ENCODE measurements at regions of chr2 and their contacts with region 1.

Region 1: GRCh38 chr2:190267302-190267701 is 52.3 kb downstream of the HIBCH start:
- DNase-seq: peak; percentile 31
- H3K4me3 ChIP-seq: no peak overlapping the region
- H3K27me3 ChIP-seq: no peaks in the 10 kb centered on the region
- CTCF ChIP-seq: no peak

Region 2: DNA sequence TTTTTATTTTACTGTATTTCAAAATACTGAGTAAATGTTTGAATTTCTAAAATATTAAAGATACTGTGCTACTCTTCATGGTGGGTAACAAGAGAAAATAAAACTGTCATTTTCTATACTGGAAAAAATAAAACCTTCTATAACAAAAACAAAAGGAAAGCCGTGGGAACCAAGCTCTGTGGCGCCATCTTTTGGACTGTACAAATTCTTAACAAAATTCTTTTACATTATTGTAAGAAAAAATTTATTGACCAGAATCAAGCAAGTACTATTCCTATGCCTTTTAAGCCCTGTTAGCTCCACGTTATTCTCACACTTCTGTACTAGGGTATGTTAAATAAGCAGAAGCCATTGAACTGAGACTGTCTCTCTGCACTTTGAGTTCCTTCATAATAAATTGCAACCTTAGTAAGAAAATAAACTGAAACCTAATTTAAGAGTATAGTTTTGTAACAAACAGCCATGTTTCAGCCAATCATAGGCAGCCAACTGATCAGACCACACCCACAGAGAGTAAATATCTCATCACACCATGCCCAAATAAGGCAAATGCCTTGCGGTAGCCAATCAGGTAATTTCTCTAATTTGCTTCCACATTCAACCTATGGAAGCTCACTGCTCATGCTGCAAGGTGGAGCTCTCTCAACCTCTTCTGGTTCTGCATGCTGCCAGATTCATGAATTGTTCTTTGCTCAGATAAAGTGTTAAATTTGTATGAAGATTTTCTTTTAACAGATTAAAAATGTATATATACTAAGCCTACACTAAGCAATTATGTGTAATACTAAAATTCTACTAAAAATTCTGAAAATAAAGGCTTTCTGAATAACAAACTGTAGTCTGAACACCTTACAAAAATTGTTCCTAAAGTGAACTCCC is 10.2 kb after region 1 on chr2:
- CTCF ChIA-PET with region 1: interaction called, 20 read pairs
- POLR2A ChIA-PET with region 1: no interaction called
- DNase-seq: no peak
- H3K4me3 ChIP-seq: no peak overlapping the region
- H3K27me3 ChIP-seq: no peaks in the 10 kb centered on the region
- CTCF ChIP-seq: peak; percentile 58